MCF 10A (cell line): ENCODE measurements at regions of chr22 and their contacts with region 1.

Region 1: GRCh38 chr22:25702040-25702439 is 39.9 kb upstream of the MYO18B start:
- DNase-seq: peak; percentile 16
- H3K4me3 Mint-ChIP-seq: no peak overlapping the region
- H3K27ac Mint-ChIP-seq: no peak overlapping the region
- H3K4me1 Mint-ChIP-seq: no peaks in the 10 kb centered on the region
- H3K27me3 Mint-ChIP-seq: no peaks in the 10 kb centered on the region
- CTCF ChIP-seq: peak; percentile 55

Region 2: GRCh38 chr22:25465949-25466348 is 236.1 kb before region 1 on chr22:
- CTCF ChIA-PET with region 1: interaction called, 30 read pairs
- POLR2A ChIA-PET with region 1: no interaction called
- intact Hi-C with region 1: loop called (anchors 1 kb)
- DNase-seq: no peak
- H3K4me3 Mint-ChIP-seq: no peak overlapping the region
- H3K27ac Mint-ChIP-seq: peak overlapping the region; percentile 31
- H3K4me1 Mint-ChIP-seq: no peaks in the 10 kb centered on the region
- H3K27me3 Mint-ChIP-seq: no peaks in the 10 kb centered on the region
- CTCF ChIP-seq: no peak

Region 3: GRCh38 chr22:25564320-25564978 is 137.6 kb before region 1 on chr22 and contains the start of gene GRK3:
- CTCF ChIA-PET with region 1: interaction called, 13 read pairs
- POLR2A ChIA-PET with region 1: no interaction called
- intact Hi-C with region 1: loop called (anchors 1 kb)
- DNase-seq: peak; percentile 75
- H3K4me3 Mint-ChIP-seq: peak within 1 kb of the TSS; percentile 77
- H3K27ac Mint-ChIP-seq: peak within 1 kb of the TSS; percentile 3
- H3K4me1 Mint-ChIP-seq: peaks cover 5% of the 10 kb centered on the region
- H3K27me3 Mint-ChIP-seq: no peaks in the 10 kb centered on the region
- CTCF ChIP-seq: no peak
- total RNA-seq, gene GRK3: 6.5 and 7.9 TPM in 2 replicates

Region 4: GRCh38 chr22:25569983-25570382 is 132.1 kb before region 1 on chr22:
- CTCF ChIA-PET with region 1: interaction called, 13 read pairs
- POLR2A ChIA-PET with region 1: no interaction called
- intact Hi-C with region 1: loop called (anchors 1 kb)
- DNase-seq: no peak
- H3K4me3 Mint-ChIP-seq: no peak overlapping the region
- H3K27ac Mint-ChIP-seq: no peak overlapping the region
- H3K4me1 Mint-ChIP-seq: peaks cover 5% of the 10 kb centered on the region
- H3K27me3 Mint-ChIP-seq: no peaks in the 10 kb centered on the region
- CTCF ChIP-seq: no peak

Region 5: GRCh38 chr22:26124991-26125725 is 423.1 kb after region 1 on chr22:
- CTCF ChIA-PET with region 1: no interaction called
- POLR2A ChIA-PET with region 1: no interaction called
- intact Hi-C with region 1: no loop called
- DNase-seq: no peak
- H3K4me3 Mint-ChIP-seq: no peak overlapping the region
- H3K27ac Mint-ChIP-seq: no peak overlapping the region
- H3K4me1 Mint-ChIP-seq: no peaks in the 10 kb centered on the region
- H3K27me3 Mint-ChIP-seq: peaks cover 65% of the 10 kb centered on the region
- CTCF ChIP-seq: no peak